ENCODE measurements at regions of chr9 and their contacts with region 1.

Region 1: GRCh38 chr9:117258184-117258866 is 156.5 kb downstream of the ASTN2 start:
- DNase-seq: no peak
- ATAC-seq: no peak
- H3K4me3 ChIP-seq: no peak overlapping the region
- H3K27ac ChIP-seq: no peak overlapping the region
- H3K4me1 ChIP-seq: no peaks in the 10 kb centered on the region
- H3K27me3 ChIP-seq: peaks cover 0 to 12% (median 0%) of the 10 kb centered on the region in 7 donors
- CTCF ChIP-seq: no peak

Region 2: GRCh38 chr9:117305454-117305853 is 47.1 kb after region 1 on chr9:
- intact Hi-C with region 1: no loop called
- DNase-seq: no peak
- ATAC-seq: no peak
- H3K4me3 ChIP-seq: no peak overlapping the region
- H3K27ac ChIP-seq: no peak overlapping the region
- H3K4me1 ChIP-seq: no peaks in the 10 kb centered on the region
- H3K27me3 ChIP-seq: peaks cover 0 to 27% (median 0%) of the 10 kb centered on the region in 7 donors
- CTCF ChIP-seq: no peak

Region 3: GRCh38 chr9:117403403-117403811 is 145.1 kb after region 1 on chr9:
- intact Hi-C with region 1: loop called in 1 of 10 experiments (anchors 10 kb)
- DNase-seq: no peak
- ATAC-seq: peak in 1 of 8 donors; percentile 33
- H3K4me3 ChIP-seq: no peak overlapping the region
- H3K27ac ChIP-seq: no peak overlapping the region
- H3K4me1 ChIP-seq: no peaks in the 10 kb centered on the region
- H3K27me3 ChIP-seq: peaks cover 0 to 57% (median 15%) of the 10 kb centered on the region in 7 donors
- CTCF ChIP-seq: no peak

Measured in heart right ventricle (tissue), 16 donors.